Activated T-helper 1 cell treated with anti-CD3 and anti-CD28 coated beads, Interleukin-12 subunit alpha, Interleukin-12 subunit beta, Interleukin-2, Interleukin-4 antibody, amounts not matched to agents 30 ng/mL and 10 ng/mL and 1 ng/mL, durations not matched to agents 14 hours and 24 hours and 36 hours (primary cell): ENCODE measurements at regions of chr4 and their contacts with region 1.

Region 1: GRCh38 chr4:184237612-184238011 is 19.9 kb upstream of the ENPP6 start:
- DNase-seq: peak; percentile 62
- H3K4me3 Mint-ChIP-seq: peak overlapping the region; percentile 70
- H3K27ac Mint-ChIP-seq: peak overlapping the region; percentile 97
- H3K4me1 Mint-ChIP-seq: peaks cover 59% of the 10 kb centered on the region
- H3K27me3 Mint-ChIP-seq: no peaks in the 10 kb centered on the region

Region 2: GRCh38 chr4:184250795-184251669 is 13.4 kb after region 1 on chr4:
- intact Hi-C with region 1: loop called (anchors 1 kb)
- DNase-seq: no peak
- H3K4me3 Mint-ChIP-seq: peak overlapping the region; percentile 27
- H3K27ac Mint-ChIP-seq: peak overlapping the region; percentile 94
- H3K4me1 Mint-ChIP-seq: peaks cover 38% of the 10 kb centered on the region
- H3K27me3 Mint-ChIP-seq: peaks cover 1% of the 10 kb centered on the region

Region 3: GRCh38 chr4:184282251-184282713 is 44.7 kb after region 1 on chr4:
- intact Hi-C with region 1: loop called (anchors 1 kb)
- DNase-seq: peak; percentile 53
- H3K4me3 Mint-ChIP-seq: peak overlapping the region; percentile 50
- H3K27ac Mint-ChIP-seq: peak overlapping the region; percentile 87
- H3K4me1 Mint-ChIP-seq: peaks cover 75% of the 10 kb centered on the region
- H3K27me3 Mint-ChIP-seq: no peaks in the 10 kb centered on the region

Region 4: DNA sequence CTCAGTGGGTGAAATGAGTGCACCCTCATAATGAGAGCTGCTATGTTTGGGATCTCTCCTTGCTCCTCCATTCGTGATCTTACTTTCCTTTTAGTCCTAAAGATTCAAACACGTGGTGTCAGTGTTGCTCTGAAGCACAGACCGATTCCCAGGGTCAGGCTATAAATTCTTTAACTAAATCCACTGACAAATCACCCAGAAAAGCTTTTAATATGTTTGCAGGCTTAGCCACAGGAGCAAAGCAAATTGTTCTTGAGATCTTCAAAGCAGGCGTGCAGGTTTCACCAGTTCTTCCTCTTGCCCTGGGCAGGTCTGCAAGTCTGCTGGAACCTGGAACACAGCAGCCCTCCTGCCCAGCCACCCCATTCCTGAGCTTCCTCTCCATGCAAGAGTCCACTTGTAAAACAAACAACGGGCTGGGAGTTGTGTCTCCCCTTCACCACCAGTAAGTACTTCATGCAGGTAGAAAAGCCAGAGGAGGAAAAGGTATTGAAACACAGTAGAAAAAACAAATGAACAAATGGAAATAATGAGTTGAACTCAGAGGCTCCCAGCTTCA is 50.2 kb after region 1 on chr4:
- intact Hi-C with region 1: loop called (anchors 1 kb)
- DNase-seq: no peak
- H3K4me3 Mint-ChIP-seq: peak overlapping the region; percentile 12
- H3K27ac Mint-ChIP-seq: peak overlapping the region; percentile 13
- H3K4me1 Mint-ChIP-seq: peaks cover 53% of the 10 kb centered on the region
- H3K27me3 Mint-ChIP-seq: no peaks in the 10 kb centered on the region

Region 5: GRCh38 chr4:184575306-184575705 is 337.7 kb after region 1 on chr4:
- intact Hi-C with region 1: loop called (anchors 1 kb)
- DNase-seq: no peak
- H3K4me3 Mint-ChIP-seq: no peak overlapping the region
- H3K27ac Mint-ChIP-seq: peak overlapping the region; percentile 55
- H3K4me1 Mint-ChIP-seq: peaks cover 19% of the 10 kb centered on the region
- H3K27me3 Mint-ChIP-seq: no peaks in the 10 kb centered on the region